Psoas muscle (tissue), 8 donors: ENCODE measurements at regions of chr12 and their contacts with region 1.

Region 1: GRCh38 chr12:127108360-127109215 is 1158.4 kb upstream of the TMEM132C start:
- DNase-seq: peak; percentile 56 to 64
- ATAC-seq: peak in 1 of 4 donors; percentile 56
- H3K4me3 ChIP-seq: no peak overlapping the region
- H3K27ac ChIP-seq: no peak overlapping the region
- H3K4me1 ChIP-seq: no peaks in the 10 kb centered on the region
- H3K27me3 ChIP-seq: no peaks in the 10 kb centered on the region
- CTCF ChIP-seq: peak; percentile 55

Region 2: GRCh38 chr12:126797525-126797924 is 311.1 kb before region 1 on chr12:
- intact Hi-C with region 1: no loop called
- DNase-seq: no peak
- ATAC-seq: no peak
- H3K4me3 ChIP-seq: no peak overlapping the region
- H3K27ac ChIP-seq: no peak overlapping the region
- H3K4me1 ChIP-seq: no peaks in the 10 kb centered on the region
- H3K27me3 ChIP-seq: no peaks in the 10 kb centered on the region
- CTCF ChIP-seq: no peak

Region 3: GRCh38 chr12:127025545-127025944 is 83.0 kb before region 1 on chr12:
- intact Hi-C with region 1: no loop called
- DNase-seq: no peak
- ATAC-seq: no peak
- H3K4me3 ChIP-seq: no peak overlapping the region
- H3K27ac ChIP-seq: no peak overlapping the region
- H3K4me1 ChIP-seq: no peaks in the 10 kb centered on the region
- H3K27me3 ChIP-seq: no peaks in the 10 kb centered on the region
- CTCF ChIP-seq: no peak

Region 4: GRCh38 chr12:127293507-127294310 is 185.1 kb after region 1 on chr12:
- intact Hi-C with region 1: loop called in 1 of 2 experiments (anchors 5 kb)
- DNase-seq: peak; percentile 54 to 72
- ATAC-seq: peak in 1 of 4 donors; percentile 54
- H3K4me3 ChIP-seq: no peak overlapping the region
- H3K27ac ChIP-seq: no peak overlapping the region
- H3K4me1 ChIP-seq: no peaks in the 10 kb centered on the region
- H3K27me3 ChIP-seq: no peaks in the 10 kb centered on the region
- CTCF ChIP-seq: peak; percentile 51

Region 5: GRCh38 chr12:127381048-127381668 is 272.6 kb after region 1 on chr12:
- intact Hi-C with region 1: loop called in 1 of 2 experiments (anchors 10 kb)
- DNase-seq: peak in 1 of 2 donors; percentile 33
- ATAC-seq: no peak
- H3K4me3 ChIP-seq: no peak overlapping the region
- H3K27ac ChIP-seq: no peak overlapping the region
- H3K4me1 ChIP-seq: no peaks in the 10 kb centered on the region
- H3K27me3 ChIP-seq: peaks cover 0 to 3% (median 0%) of the 10 kb centered on the region in 3 donors
- CTCF ChIP-seq: peak; percentile 47